Activated B cell treated with CpG ODN at 0.5 μM for 24 hours (primary cell): ENCODE measurements at regions of chr19 and their contacts with region 1.

Region 1: DNA sequence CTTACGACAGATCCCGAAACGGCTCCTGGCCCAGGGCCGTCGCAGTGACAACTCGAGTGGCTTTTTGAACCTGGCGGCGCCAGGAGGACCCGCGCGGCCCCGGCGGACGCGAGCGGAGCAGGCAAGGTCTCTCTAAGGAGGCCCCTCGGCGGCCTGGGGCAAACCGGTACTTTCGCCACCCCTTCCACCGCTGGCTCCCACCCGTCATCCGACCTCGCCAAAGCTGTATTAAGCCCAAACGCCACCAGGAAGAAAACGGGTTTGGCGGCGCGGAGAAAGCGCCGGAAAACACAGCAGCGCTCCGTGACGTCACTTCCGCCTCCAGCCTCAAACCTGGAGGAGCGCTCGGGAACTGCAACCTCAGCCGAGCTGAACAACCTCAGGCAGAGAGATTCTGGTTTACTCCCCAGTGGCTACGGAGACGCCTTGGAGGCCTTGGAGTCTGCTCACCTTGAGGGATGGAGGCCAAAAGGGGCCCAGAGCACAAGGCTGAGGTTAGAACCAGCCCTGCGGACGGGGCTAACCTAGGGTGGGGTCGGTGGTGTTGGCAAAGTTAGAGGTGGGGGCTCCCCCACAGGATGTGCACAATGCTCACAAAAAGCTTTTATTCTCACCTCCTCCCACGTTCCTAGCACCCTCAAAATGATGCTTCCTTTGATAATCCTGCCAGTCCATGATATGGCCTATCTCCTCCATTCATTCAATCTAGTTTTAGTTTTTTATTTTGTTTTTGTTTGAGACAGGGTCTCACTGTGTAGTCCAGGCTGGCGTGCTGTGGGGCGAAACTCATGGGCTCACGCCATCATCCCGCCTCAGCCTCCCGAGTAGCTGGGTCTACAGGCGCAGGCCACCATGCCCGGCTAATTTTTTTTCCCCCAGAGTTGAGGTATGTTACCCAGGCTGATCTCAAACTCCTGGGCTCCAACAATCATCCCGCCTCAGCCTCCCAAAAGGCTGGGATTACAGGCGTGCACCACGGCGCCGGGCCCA is at the start of gene ZNF266:
- DNase-seq: peak; percentile 84
- ATAC-seq: peak; percentile 92
- H3K4me3 Mint-ChIP-seq: peak within 1 kb of the TSS; percentile 92
- H3K27ac Mint-ChIP-seq: peak within 1 kb of the TSS; percentile 97
- H3K4me1 Mint-ChIP-seq: peaks cover 38% of the 10 kb centered on the region
- H3K27me3 Mint-ChIP-seq: no peaks in the 10 kb centered on the region
- CTCF ChIP-seq: peak; percentile 28
- total RNA-seq, gene ZNF266: 43.7 and 50.3 TPM in 2 replicates

Region 2: DNA sequence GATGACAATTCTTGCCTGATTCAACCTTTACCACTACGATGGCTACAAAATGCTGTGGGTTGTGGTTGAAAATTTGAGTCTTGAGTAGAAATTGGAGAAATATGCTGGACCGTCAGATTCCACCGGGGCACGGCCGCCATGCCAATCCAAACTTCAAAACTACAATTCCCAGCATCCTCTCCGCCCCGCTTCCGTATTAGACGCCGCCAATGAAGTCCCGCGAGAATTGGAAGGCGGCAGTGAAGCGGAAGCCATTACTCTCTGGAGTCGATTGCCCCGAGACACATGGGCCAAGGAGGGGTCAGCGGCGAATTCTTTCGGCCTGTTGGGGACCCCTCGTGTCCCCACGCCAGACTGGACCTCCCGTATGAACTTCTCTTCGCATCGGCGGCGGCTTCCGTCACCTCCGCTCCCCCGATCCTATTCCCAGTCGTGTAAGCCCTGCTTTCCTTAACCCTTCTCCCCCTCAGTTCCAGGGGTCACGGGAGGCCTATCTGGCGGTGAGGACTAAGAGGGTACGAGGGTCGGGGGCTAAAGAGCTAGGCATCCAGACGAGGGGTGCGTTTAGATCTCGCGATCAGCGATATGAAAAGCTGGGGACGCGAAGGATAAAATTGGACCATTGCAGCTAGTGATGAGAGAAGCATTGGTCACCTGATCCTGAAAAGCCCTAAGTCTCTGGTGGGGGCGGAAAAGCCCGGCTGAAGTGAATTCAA is 295.3 kb before region 1 on chr19 and contains the start of gene ZNF317:
- CTCF ChIA-PET with region 1: no interaction called
- POLR2A ChIA-PET with region 1: no interaction called
- intact Hi-C with region 1: loop called (anchors 2 kb)
- DNase-seq: peak; percentile 74
- ATAC-seq: peak; percentile 93
- H3K4me3 Mint-ChIP-seq: peak within 1 kb of the TSS; percentile 99
- H3K27ac Mint-ChIP-seq: peak within 1 kb of the TSS; percentile 98
- H3K4me1 Mint-ChIP-seq: peaks cover 42% of the 10 kb centered on the region
- H3K27me3 Mint-ChIP-seq: peaks cover 3% of the 10 kb centered on the region
- CTCF ChIP-seq: no peak
- total RNA-seq, gene ZNF317: 64.4 and 65.8 TPM in 2 replicates

Region 3: DNA sequence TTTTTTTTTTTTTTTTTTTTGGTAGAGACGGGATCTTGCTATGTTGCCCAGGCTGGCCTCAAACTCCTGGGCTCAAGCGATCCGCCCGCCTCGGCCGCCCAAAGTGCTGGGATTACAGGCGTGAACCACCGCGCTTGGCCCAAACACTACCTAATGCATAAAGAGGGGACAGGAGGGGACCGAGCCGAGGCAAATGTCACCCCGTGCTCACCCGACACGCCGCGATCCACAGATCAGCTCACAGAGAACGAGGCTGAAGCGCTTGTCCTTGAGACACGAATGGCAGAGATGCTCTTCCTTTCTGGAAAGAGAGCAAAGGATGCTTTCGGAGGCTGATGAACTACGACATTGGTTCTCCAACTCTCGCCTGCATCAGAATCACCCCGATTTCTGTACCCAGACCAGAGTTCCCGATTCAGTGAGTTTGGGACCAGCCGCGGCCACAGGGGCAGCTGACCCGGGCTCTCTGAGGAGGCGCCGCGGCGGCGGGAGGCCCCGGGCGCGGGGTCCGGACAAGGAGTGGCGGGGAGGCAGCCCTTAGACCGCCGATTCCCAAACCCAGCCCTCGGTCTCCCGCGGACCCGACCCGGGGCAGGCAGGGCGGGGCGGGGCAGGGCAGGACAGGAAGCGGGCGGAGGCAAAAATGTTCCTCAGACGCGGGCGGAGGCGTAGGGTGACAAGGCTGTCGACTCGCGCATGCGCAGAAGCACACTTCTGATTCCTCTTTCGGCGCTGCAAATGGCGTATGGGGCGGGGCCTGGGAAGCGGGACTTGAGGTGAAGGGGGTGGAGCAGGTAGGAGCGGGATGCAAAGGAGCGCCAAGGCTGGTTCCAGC is 126.2 kb before region 1 on chr19 and contains the start of gene ZNF699:
- CTCF ChIA-PET with region 1: no interaction called
- POLR2A ChIA-PET with region 1: interaction called, 5 read pairs
- intact Hi-C with region 1: loop called (anchors 1 kb)
- DNase-seq: peak; percentile 94
- ATAC-seq: peak; percentile 88
- H3K4me3 Mint-ChIP-seq: peak within 1 kb of the TSS; percentile 96
- H3K27ac Mint-ChIP-seq: peak within 1 kb of the TSS; percentile 98
- H3K4me1 Mint-ChIP-seq: peaks cover 24% of the 10 kb centered on the region
- H3K27me3 Mint-ChIP-seq: no peaks in the 10 kb centered on the region
- CTCF ChIP-seq: no peak
- total RNA-seq, gene ZNF699: 10.3 and 11.7 TPM in 2 replicates

Region 4: GRCh38 chr19:9413240-9413954 is 22.2 kb before region 1 on chr19:
- CTCF ChIA-PET with region 1: no interaction called
- POLR2A ChIA-PET with region 1: no interaction called
- intact Hi-C with region 1: no loop called
- DNase-seq: no peak
- ATAC-seq: no peak
- H3K4me3 Mint-ChIP-seq: no peak overlapping the region
- H3K27ac Mint-ChIP-seq: no peak overlapping the region
- H3K4me1 Mint-ChIP-seq: no peaks in the 10 kb centered on the region
- H3K27me3 Mint-ChIP-seq: no peaks in the 10 kb centered on the region
- CTCF ChIP-seq: no peak

Region 5: GRCh38 chr19:9538183-9539058 is 102.8 kb after region 1 on chr19 and contains the start of gene ZNF426:
- CTCF ChIA-PET with region 1: no interaction called
- POLR2A ChIA-PET with region 1: no interaction called
- intact Hi-C with region 1: loop called (anchors 5 kb)
- DNase-seq: peak; percentile 79
- ATAC-seq: peak; percentile 92
- H3K4me3 Mint-ChIP-seq: peak within 1 kb of the TSS; percentile 98
- H3K27ac Mint-ChIP-seq: peak within 1 kb of the TSS; percentile 99
- H3K4me1 Mint-ChIP-seq: peaks cover 26% of the 10 kb centered on the region
- H3K27me3 Mint-ChIP-seq: no peaks in the 10 kb centered on the region
- CTCF ChIP-seq: no peak
- total RNA-seq, gene ZNF426: 18.8 and 22.7 TPM in 2 replicates

Region 6: DNA sequence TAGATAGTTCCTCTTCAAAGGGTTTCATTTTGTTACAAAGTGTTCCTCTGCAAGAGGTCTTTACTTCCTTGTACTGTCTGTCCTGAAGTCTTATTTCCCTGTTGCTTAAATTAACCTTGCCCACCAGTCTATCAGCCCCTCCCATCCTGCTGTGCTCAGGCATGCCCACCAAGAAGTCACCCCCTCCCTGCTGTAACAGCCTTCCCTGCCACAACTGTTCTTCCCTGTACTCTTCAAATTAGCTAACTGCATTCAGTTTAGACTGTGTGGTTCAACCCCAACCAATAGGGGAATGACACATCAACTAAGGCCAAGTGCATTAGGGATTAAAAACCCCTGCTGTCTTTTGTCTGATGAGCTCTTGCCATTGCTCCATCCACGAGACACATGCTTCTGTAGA is 273.7 kb after region 1 on chr19:
- CTCF ChIA-PET with region 1: no interaction called
- POLR2A ChIA-PET with region 1: interaction called, 15 read pairs
- intact Hi-C with region 1: no loop called
- DNase-seq: no peak
- ATAC-seq: no peak
- H3K4me3 Mint-ChIP-seq: no peak overlapping the region
- H3K27ac Mint-ChIP-seq: peak overlapping the region; percentile 65
- H3K4me1 Mint-ChIP-seq: peaks cover 15% of the 10 kb centered on the region
- H3K27me3 Mint-ChIP-seq: peaks cover 7% of the 10 kb centered on the region
- CTCF ChIP-seq: no peak

Region 7: DNA sequence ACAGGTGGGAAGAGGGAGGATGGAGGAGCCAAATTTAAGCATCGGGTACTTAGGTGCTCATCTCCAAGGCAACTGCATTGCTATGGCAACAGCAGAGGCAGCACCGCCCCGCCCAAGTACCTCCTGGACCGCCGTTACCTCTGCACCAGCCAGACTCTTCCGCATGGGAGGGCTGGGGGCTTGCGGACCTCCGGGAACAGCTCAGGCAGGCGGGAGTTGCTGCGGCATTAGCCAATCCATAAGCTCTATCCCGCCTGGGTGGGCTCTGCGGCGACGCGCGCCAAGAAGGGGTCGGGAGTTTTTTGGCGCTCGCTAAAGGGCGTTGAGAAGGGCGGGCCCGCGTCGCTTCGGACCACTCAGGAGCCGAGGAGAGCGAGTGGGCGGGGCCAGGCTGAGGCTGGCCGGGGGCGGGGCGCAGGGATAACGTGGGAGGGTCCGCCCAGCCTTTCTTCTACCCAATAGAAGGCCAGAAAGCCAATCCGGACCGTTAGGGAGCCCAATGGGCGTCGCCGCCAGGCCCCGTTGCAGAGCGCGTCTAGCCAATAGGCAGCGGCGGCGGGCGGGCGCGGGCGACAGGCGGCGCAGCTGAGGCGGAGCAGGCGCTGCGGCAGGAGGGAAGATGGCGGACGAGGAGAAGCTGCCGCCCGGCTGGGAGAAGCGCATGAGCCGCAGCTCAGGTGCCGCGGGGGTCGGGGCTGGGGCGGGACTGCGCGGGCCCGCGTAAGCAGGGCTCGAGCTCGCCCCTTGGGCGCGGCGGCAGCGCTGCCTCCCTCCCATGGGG is 399.3 kb after region 1 on chr19 and contains the start of gene PIN1:
- CTCF ChIA-PET with region 1: no interaction called
- POLR2A ChIA-PET with region 1: no interaction called
- intact Hi-C with region 1: loop called (anchors 2 kb)
- DNase-seq: peak; percentile 98
- ATAC-seq: peak; percentile 95
- H3K4me3 Mint-ChIP-seq: peak within 1 kb of the TSS; percentile 93
- H3K27ac Mint-ChIP-seq: peak within 1 kb of the TSS; percentile 94
- H3K4me1 Mint-ChIP-seq: peaks cover 12% of the 10 kb centered on the region
- H3K27me3 Mint-ChIP-seq: no peaks in the 10 kb centered on the region
- CTCF ChIP-seq: no peak
- total RNA-seq, gene PIN1: 57.1 and 66.0 TPM in 2 replicates